Heart left ventricle (tissue), 16 donors: ENCODE measurements at regions of chr6 and their contacts with region 1.

Region 1: GRCh38 chr6:16319813-16320532 is 81.6 kb downstream of the GMPR start:
- DNase-seq: peak; percentile 75 to 88 (median 82)
- ATAC-seq: peak; percentile 84 to 88 (median 86)
- H3K4me3 ChIP-seq: peak overlapping the region in 9 of 12 donors; percentile 5 to 45 (median 32)
- H3K27ac ChIP-seq: peak overlapping the region; percentile 69 to 97 (median 92)
- H3K4me1 ChIP-seq: peaks cover 3 to 75% (median 58%) of the 10 kb centered on the region in 12 donors
- H3K27me3 ChIP-seq: no peaks in the 10 kb centered on the region
- CTCF ChIP-seq: no peak
- POLR2A ChIP-seq: no peak

Region 2: GRCh38 chr6:16228709-16229665 is 91.0 kb before region 1 on chr6:
- intact Hi-C with region 1: loop called in 2 of 10 experiments (anchors 5 to 10 kb)
- DNase-seq: no peak
- ATAC-seq: peak in 3 of 4 donors; percentile 44 to 72 (median 72)
- H3K4me3 ChIP-seq: peak overlapping the region in 8 of 12 donors; percentile 4 to 34 (median 11)
- H3K27ac ChIP-seq: no peak overlapping the region
- H3K4me1 ChIP-seq: peaks cover 0 to 16% (median 11%) of the 10 kb centered on the region in 12 donors
- H3K27me3 ChIP-seq: peaks cover 0 to 12% (median 0%) of the 10 kb centered on the region in 9 donors
- CTCF ChIP-seq: peak in 8 of 12 donors; percentile 17 to 49 (median 28)
- POLR2A ChIP-seq: no peak

Region 3: DNA sequence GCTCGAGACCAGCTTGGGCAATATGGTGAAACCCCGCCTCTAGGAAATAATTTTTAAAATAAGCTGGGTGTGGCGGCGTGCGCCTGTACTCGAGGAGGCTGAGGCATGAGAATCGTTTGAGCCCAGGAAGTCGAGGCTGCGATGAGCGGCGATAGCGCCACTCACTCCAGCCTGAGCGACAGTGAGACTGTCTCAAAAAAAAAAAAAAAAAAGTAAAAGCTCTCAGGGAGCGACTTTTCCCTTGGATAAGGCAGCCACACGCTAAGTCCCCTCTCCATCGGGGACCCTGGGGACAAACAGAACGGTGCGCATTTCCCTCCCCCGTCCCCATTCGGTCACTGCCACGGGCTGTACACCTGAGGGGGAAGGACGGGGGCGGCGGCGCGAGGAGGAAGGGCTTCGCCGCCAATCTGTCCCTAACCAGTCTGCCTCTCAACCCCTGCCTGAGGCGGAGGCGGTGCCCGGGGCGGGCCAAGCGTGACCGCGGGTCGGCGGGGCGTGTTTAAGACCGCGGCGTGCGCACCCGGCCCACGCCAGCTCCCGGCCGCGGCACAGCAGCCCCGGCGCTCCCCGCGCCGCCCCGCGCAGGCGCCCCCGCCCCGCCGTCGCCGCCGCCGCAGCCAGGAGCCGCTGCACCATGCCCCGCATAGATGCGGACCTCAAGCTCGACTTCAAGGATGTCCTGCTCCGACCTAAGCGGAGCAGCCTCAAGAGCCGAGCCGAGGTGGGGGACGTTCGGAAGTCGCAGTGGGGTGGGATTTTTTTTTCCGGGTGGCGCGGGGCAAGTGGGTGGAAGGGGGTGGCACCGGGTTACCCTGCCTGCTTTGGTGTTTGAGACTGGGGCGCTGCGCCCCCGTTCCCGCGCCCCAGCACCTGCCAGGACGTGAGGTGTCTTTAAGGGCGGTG is 81.7 kb before region 1 on chr6 and contains the start of gene GMPR:
- intact Hi-C with region 1: loop called in 4 of 10 experiments (anchors 1 to 10 kb)
- DNase-seq: peak; percentile 82 to 91 (median 88)
- ATAC-seq: peak; percentile 53 to 84 (median 80)
- H3K4me3 ChIP-seq: peak within 1 kb of the TSS; percentile 50 to 88 (median 76)
- H3K27ac ChIP-seq: peak within 1 kb of the TSS; percentile 59 to 92 (median 86)
- H3K4me1 ChIP-seq: peaks cover 0 to 62% (median 28%) of the 10 kb centered on the region in 12 donors
- H3K27me3 ChIP-seq: no peaks in the 10 kb centered on the region
- CTCF ChIP-seq: peak in 4 of 12 donors; percentile 12 to 27 (median 20)
- POLR2A ChIP-seq: peak in 1 of 2 donors; percentile 58
- total RNA-seq, gene GMPR: 67.8 to 160 (median 115) TPM

Region 4: GRCh38 chr6:16286148-16286522 is 33.8 kb before region 1 on chr6:
- intact Hi-C with region 1: loop called in 1 of 10 experiments (anchors 5 kb)
- DNase-seq: no peak
- ATAC-seq: peak; percentile 14 to 65 (median 51)
- H3K4me3 ChIP-seq: no peak overlapping the region
- H3K27ac ChIP-seq: no peak overlapping the region
- H3K4me1 ChIP-seq: no peaks in the 10 kb centered on the region
- H3K27me3 ChIP-seq: no peaks in the 10 kb centered on the region
- CTCF ChIP-seq: peak; percentile 44 to 76 (median 64)
- POLR2A ChIP-seq: no peak